ENCODE measurements at regions of chrX and their contacts with region 1.

Region 1: DNA sequence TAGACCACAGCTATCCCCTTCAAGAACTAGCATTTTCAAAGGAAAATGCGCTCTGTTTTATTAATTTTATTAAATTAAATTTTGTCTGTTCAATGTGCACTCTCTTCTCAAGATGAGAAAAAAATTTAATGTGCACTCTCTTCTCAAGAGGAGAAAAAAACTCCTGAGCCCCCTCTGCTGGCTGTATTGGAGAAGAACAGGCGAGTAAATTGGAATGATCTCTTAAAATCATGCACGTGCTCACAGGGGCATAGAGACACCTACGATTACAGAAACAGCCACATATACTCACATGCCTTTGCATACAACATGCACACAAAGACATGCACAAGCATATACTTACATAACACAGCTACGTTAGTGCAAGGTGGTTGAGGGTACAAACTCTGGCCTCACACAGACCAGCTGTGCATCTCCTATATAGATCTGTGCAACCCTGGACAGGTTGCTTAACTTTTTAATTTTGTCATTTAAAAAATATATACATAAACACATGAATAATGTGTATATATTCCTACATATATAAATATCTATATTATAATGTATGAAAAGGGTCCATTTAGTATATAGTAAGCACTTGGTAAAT is 176.2 kb upstream of the CXorf66 start:
- DNase-seq: no peak
- ATAC-seq: no peak
- H3K4me3 ChIP-seq: no peak overlapping the region
- H3K27ac ChIP-seq: no peak overlapping the region
- H3K4me1 ChIP-seq: no peaks in the 10 kb centered on the region
- H3K27me3 ChIP-seq: no peaks in the 10 kb centered on the region
- CTCF ChIP-seq: peak in 3 of 5 experiments; percentile 18 to 50 (median 26)
- POLR2A ChIP-seq: no peak

Region 2: GRCh38 chrX:140071037-140071436 is 70.5 kb before region 1 on chrX:
- in situ Hi-C with region 1: no loop called
- intact Hi-C with region 1: loop called (anchors 2 kb)
- DNase-seq: no peak
- ATAC-seq: no peak
- H3K4me3 ChIP-seq: no peak overlapping the region
- H3K27ac ChIP-seq: no peak overlapping the region
- H3K4me1 ChIP-seq: no peaks in the 10 kb centered on the region
- H3K27me3 ChIP-seq: no peaks in the 10 kb centered on the region
- CTCF ChIP-seq: no peak
- POLR2A ChIP-seq: no peak

Region 3: DNA sequence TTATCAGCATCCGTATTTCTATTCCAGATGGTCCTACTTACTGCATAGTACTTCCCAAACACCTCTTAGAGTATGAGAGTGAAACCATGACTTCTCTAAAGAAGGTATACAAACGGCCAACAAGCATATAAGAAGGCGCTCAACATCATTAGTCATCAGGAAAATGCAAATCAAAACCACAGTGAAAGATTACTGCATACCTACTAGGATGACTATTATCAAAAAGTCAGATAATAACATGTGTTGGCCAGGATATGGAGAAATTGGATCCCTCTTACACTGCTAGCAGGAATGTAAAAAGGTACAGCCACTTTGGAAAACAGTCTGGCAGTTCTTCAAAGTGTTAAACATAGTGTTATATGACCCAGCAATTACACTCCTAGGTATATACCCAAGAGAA is 39.0 kb after region 1 on chrX:
- in situ Hi-C with region 1: no loop called
- intact Hi-C with region 1: no loop called
- DNase-seq: no peak
- ATAC-seq: no peak
- H3K4me3 ChIP-seq: no peak overlapping the region
- H3K27ac ChIP-seq: no peak overlapping the region
- H3K4me1 ChIP-seq: no peaks in the 10 kb centered on the region
- H3K27me3 ChIP-seq: no peaks in the 10 kb centered on the region
- CTCF ChIP-seq: no peak
- POLR2A ChIP-seq: no peak

Region 4: GRCh38 chrX:140229187-140229586 is 87.7 kb after region 1 on chrX:
- in situ Hi-C with region 1: loop called in 1 of 4 experiments (anchors 25 kb)
- intact Hi-C with region 1: no loop called
- DNase-seq: no peak
- ATAC-seq: no peak
- H3K4me3 ChIP-seq: no peak overlapping the region
- H3K27ac ChIP-seq: no peak overlapping the region
- H3K4me1 ChIP-seq: no peaks in the 10 kb centered on the region
- H3K27me3 ChIP-seq: no peaks in the 10 kb centered on the region
- CTCF ChIP-seq: no peak
- POLR2A ChIP-seq: no peak

Measured in gastrocnemius medialis (tissue), 4 donors.